ENCODE measurements at regions of chr1 and their contacts with region 1.

Region 1: GRCh38 chr1:28248283-28249012 is 10.9 kb upstream of the SESN2 start:
- DNase-seq: peak; percentile 80 to 85
- ATAC-seq: peak; percentile 38 to 69 (median 56)
- H3K4me3 ChIP-seq: peak overlapping the region; percentile 70
- H3K27ac ChIP-seq: peak overlapping the region; percentile 88
- H3K4me1 ChIP-seq: peaks cover 36% of the 10 kb centered on the region
- H3K27me3 ChIP-seq: no peaks in the 10 kb centered on the region
- CTCF ChIP-seq: peak; percentile 96

Region 2: DNA sequence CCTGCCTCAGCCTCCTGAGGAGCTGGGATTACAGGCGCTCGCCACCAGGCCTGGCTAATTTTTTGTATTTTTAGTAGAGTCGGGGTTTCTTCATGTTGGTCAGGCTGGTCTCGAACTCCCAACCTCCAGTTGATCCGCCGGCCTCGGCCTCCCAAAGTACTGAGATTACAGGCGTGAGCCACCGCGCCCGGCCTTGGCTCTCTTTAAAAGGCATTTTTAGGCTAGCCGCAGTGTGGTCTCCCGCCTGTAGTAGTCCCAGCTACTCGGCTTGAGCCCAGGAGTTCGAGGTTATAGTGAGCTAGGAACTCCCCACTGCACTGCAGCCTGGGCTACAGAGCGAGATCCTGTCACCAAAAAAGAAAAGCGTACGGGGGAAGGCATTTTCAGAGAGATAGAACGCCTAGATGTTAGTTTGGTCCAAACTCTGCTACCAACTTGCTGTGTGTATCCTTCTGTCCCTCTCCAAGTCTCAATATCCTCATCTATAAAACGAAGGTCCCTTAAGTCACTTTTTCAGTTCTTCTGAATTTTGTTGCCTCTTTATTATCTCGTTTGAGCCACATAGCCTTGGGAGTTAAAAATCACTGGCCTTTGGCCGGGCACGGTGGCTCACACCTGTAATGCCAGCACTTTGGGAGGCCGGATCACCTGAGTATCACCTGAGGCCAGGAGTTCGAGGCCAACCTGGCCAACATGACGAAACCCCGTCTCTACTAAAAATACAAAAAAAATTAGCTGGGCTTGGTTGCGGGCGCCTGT is 81.1 kb after region 1 on chr1:
- intact Hi-C with region 1: loop called in 1 of 2 experiments (anchors 5 kb)
- DNase-seq: peak; percentile 25 to 68
- ATAC-seq: peak; percentile 41 to 66 (median 46)
- H3K4me3 ChIP-seq: peak overlapping the region; percentile 80
- H3K27ac ChIP-seq: peak overlapping the region; percentile 93
- H3K4me1 ChIP-seq: peaks cover 5% of the 10 kb centered on the region
- H3K27me3 ChIP-seq: no peaks in the 10 kb centered on the region
- CTCF ChIP-seq: no peak

Region 3: DNA sequence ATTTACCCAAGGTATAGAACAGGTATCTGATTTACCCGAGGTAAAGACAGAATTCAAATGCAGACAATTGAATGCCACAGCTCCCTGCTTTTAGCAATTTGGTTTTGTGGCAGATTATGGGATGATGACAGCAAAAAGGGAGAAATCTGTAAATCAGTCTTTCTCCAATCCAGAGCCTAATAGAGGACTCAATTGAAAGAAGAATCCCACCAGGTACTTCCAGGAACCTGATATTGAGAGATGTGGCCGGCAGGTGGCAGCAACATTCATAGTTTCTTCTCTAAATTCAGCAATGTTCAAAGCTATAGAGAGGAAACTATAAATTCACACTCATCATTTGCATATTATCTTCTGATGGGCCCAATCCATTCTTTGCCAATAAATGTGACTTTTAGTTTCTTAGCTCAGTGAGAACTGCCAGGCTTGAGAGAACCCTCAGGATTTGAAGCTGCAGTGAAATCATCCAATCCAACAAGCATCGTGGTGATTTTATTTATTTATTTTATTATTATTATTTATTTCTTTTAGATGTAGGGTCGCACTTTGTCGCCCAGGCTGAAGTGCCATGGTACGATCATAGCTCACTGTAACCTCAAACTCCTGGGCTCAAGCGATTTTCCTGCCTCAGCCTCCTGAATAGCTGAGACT is 111.3 kb after region 1 on chr1:
- intact Hi-C with region 1: loop called in 1 of 2 experiments (anchors 5 kb)
- DNase-seq: peak; percentile 62 to 78
- ATAC-seq: peak in 3 of 4 donors; percentile 51 to 69 (median 58)
- H3K4me3 ChIP-seq: no peak overlapping the region
- H3K27ac ChIP-seq: no peak overlapping the region
- H3K4me1 ChIP-seq: no peaks in the 10 kb centered on the region
- H3K27me3 ChIP-seq: no peaks in the 10 kb centered on the region
- CTCF ChIP-seq: peak; percentile 71

Region 4: DNA sequence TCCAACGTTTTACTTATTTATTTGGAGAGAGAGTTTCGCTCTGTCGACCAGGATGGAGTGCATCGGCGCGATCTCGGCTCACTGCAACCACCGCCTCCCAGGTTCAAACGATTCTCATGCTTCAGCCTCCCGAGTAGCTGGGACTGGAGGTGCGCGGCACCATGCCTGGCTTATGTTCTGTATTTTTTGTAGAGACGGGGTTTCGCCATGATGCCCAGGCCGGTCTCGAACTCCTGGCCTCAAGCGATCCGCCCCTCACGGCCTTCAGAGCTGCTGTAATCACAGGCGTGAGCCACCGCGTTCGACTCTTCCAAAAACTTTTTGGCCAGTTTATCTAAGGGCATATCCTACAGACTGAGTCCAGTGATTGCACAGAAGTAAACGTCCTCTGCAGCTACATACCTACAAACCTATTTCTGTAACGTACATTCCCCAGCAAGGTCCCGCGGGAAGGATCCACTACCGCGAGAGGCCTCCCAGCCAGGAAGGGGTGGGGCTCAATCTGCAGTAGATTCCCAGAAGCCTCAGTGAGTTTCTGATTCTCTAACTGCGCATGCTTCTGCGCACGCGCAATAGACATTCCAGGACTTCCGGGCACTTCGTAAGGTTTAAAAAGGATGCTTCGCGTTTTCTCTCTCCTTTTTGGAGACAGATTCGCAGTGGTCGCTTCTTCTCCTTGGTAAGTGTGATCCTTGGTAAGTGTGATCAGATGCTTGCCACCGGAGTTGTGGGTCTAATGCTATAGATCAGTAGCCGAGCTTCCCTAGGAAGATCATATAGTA is 257.1 kb after region 1 on chr1 and contains the start of gene RCC1:
- intact Hi-C with region 1: loop called in 1 of 2 experiments (anchors 5 kb)
- DNase-seq: peak; percentile 97 to 98
- ATAC-seq: peak; percentile 90 to 94 (median 92)
- H3K4me3 ChIP-seq: peak within 1 kb of the TSS; percentile 83
- H3K27ac ChIP-seq: peak within 1 kb of the TSS; percentile 88
- H3K4me1 ChIP-seq: peaks cover 39% of the 10 kb centered on the region
- H3K27me3 ChIP-seq: no peaks in the 10 kb centered on the region
- CTCF ChIP-seq: no peak
- total RNA-seq, gene RCC1: 7.0 to 20.8 (median 9.2) TPM

Measured in psoas muscle (tissue), 8 donors.